HepG2 (cell line): ENCODE measurements at regions of chr7 and their contacts with region 1.

Region 1: DNA sequence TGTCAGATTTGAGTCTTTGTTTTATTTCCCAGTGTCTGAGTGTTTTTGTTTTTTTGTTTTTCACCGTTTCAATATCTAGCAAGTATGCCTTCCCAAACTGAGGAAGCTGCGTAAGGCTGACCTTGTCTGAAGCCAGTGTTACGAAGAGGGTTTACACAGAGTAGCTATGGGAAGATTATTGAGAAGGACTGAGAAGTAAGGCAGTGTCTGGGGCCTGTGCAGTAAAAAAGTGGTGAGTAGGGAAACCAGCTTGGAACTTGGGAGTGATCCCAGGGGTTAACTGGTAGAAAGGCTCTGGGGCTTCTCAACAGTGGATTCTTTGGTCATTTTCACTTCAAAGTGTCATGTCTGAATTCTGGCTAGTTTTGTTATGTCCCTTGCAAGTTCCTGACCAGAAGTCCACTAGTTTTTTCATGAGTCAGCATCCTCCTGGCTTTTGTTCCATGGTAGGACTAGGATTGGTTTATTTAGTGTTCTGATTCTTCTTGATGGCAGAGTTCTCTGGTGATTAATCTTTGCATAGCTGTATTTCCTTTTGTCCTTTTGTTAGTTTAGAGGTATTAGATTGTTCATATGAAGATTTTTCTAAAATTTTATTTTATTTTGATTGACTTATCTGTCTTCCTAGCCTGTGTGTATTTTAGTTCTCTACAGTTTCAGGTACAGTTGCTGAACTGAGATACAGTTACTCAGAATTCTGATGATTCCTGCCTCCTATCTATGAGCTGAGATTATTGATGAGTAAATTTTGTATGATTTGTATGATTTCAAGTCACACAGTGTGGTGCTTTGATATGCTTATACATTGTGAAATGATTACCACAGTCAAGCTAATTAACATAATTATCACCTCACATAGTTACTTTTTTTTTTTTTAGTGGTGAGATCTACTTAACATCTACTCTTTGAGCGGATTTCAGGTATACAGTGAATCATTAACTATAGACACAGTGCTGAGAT is 19.0 kb downstream of the GARS1 start:
- DNase-seq: no peak
- ATAC-seq: no peak
- H3K4me3 ChIP-seq: no peak overlapping the region
- H3K27ac ChIP-seq: no peak overlapping the region
- H3K4me1 ChIP-seq: 0 out of 2 replicates have a peak, but pooled peaks cover 8% of the 10 kb centered on the region
- H3K27me3 ChIP-seq: no peaks in the 10 kb centered on the region
- CTCF ChIP-seq: no peak
- EP300 ChIP-seq: no peak
- POLR2A ChIP-seq: no peak
- RAD21 ChIP-seq: no peak

Region 2: GRCh38 chr7:30665449-30665848 is 51.8 kb after region 1 on chr7:
- CTCF ChIA-PET with region 1: no interaction called
- POLR2A ChIA-PET with region 1: no interaction called
- in situ Hi-C with region 1: loop called (anchors 5 kb)
- intact Hi-C with region 1: no loop called
- DNase-seq: no peak
- ATAC-seq: no peak; the same call in 2 of the 3 replicates
- H3K4me3 ChIP-seq: no peak overlapping the region
- H3K27ac ChIP-seq: no peak overlapping the region
- H3K4me1 ChIP-seq: no peaks in the 10 kb centered on the region
- H3K27me3 ChIP-seq: peaks cover 1 to 8% of the 10 kb centered on the region in 2 experiments; a peak in 2 of 5 replicates
- CTCF ChIP-seq: no peak
- EP300 ChIP-seq: no peak
- POLR2A ChIP-seq: no peak
- RAD21 ChIP-seq: no peak